ENCODE measurements at regions of chr5 and their contacts with region 1.

Region 1: DNA sequence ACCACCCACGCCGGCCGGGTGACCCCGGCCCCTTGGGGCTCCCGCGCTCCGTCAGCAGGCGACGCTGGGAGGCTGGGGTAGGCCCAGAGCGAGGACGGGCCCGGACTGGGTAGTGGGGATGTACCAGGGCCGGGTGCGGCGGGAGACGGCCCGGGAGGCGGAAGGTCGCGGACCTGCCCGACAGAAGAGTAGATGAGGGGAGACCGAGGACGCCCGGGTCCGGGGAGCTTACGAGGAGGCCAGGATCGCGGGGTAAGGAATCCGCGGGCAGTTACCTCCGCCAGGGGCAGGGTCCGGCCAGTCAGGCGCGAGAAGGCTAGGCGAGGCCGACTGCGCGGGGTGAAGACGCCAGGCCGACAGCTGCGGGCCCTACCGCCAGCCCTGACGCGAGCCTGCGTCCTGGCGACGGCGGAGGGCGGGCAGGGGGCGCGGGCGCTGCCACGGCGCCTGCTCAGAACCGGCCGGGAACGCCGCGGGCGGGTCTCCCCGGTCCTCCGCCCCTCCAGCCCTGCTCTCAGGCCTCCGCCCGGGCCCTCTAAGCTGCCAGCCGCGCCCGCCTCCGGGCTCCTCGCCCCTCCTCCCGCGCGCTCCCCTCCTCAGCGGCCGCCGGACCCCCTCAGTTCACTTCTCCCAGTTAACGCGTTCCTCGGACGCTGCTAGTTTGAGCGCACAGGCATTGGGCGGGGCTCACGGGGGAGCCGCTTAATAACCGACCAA is at the start of gene CPLANE1:
- DNase-seq: peak; percentile 86 to 93
- ATAC-seq: peak; percentile 97
- H3K4me3 ChIP-seq: peak within 1 kb of the TSS; percentile 73
- H3K27ac ChIP-seq: peak within 1 kb of the TSS; percentile 36 to 86
- H3K4me1 ChIP-seq: peaks cover 0 to 2% of the 10 kb centered on the region in 2 donors
- H3K27me3 ChIP-seq: no peaks in the 10 kb centered on the region
- total RNA-seq, gene CPLANE1: 23.5 to 35.6 TPM

Region 2: DNA sequence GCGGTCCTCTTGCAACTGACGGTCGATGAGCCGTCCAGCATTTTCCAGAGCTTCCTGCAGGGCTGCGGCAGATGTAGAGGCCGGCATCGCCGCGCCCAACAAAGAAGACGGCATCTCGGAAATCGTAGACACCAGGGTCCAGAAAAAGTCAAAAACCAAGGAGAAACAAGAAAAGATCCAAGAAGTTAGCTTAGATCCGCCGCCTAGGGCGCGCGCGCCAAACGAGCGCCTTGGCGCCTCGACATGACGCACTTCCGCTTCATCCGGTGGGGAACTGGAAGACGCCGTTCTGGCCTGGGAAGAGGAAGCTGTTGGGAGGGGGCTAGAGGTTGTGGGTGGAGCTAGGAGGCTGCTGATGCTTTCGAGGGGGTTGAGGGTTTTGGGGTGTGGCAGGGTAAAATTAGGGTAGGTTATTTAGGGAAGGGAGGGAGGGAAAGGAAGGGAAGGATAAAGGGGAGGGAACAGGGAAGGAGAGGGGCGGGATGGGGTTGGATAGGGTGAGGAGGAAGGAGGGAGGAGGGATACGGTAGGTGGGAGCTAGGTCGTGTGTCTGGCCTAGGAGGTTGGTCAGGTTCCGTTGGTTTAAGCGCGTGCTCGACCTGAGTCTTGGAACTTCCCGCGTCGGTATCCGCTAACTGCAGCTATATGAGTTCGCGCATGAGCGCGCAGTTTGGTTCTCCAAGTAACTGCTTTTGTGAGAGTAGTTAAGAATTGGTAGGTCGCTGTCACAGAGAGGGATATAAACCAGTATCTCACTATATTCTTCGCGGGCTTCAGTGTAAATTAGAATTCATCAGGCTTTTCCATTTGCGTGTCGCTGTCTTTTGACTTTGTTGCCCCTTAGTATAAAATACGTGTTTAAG is 122.0 kb after region 1 on chr5 and contains the start of gene NUP155:
- intact Hi-C with region 1: loop called in 1 of 2 experiments (anchors 5 kb)
- DNase-seq: peak; percentile 95 to 97
- ATAC-seq: peak; percentile 98
- H3K4me3 ChIP-seq: peak within 1 kb of the TSS; percentile 83 to 91
- H3K27ac ChIP-seq: peak within 1 kb of the TSS in 1 of 2 donors; percentile 78
- H3K4me1 ChIP-seq: peaks cover 0 to 2% of the 10 kb centered on the region in 2 donors
- H3K27me3 ChIP-seq: no peaks in the 10 kb centered on the region
- total RNA-seq, gene NUP155: 16.5 to 19.2 TPM